T-cell (primary cell): ENCODE measurements at regions of chr7 and their contacts with region 1.

Region 1: DNA sequence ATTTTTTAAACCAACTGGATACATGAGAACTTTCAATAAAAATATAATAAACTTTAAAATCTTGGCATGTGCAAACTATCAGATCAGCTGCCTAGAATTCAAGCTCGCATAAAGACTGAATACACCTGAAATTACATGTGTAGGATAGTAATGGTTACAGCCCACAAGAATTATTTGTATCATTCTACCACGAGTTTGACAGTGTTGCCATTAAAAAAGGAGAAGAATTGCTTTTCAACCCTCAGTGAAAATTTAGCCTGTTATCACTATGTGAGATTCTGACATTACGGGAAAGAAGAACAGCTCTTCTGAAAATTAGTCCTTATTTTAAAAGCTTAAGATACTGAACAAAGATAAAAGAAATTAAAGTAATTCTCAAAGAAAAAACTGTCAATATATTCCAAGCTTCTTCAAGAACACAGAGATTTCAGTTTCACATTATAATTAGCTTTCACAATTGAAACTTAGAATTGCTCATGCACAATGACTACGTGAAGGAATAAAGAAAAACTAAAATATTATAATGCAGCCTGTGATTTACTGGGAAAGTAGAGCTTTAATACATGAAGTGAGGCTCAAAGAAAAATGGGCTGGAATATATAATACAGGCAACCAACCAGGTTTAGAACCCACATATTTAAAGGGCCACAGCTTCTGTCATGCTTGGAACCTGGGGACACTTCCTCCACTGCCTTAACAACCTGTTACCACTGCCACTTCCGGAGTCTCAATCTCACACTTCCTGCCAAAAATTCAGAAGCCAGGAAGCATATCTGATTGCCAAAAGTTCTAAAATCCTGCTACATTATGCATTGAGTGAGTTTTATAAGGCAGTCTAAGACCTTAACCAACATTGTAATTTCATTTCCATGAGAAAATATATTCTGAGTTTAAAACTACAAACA is 23.2 kb downstream of the TPK1 start:
- DNase-seq: peak in 33 of 35 experiments; percentile 9 to 76 (median 48)
- ATAC-seq: peak; percentile 94 to 99 (median 98)
- H3K4me3 ChIP-seq: no peak overlapping the region
- H3K4me3 Mint-ChIP-seq: peak overlapping the region; percentile 64 to 67 (median 67)
- H3K27ac ChIP-seq: peak overlapping the region; percentile 64
- H3K27ac Mint-ChIP-seq: peak overlapping the region; percentile 94 to 95
- H3K4me1 ChIP-seq: peaks cover 10 to 35% of the 10 kb centered on the region in 2 experiments
- H3K4me1 Mint-ChIP-seq: peaks cover 61 to 76% (median 71%) of the 10 kb centered on the region in 3 donors
- H3K27me3 ChIP-seq: no peaks in the 10 kb centered on the region
- H3K27me3 Mint-ChIP-seq: no peaks in the 10 kb centered on the region

Region 2: GRCh38 chr7:144629011-144629410 is 183.6 kb before region 1 on chr7:
- CTCF ChIA-PET with region 1: no interaction called
- POLR2A ChIA-PET with region 1: no interaction called
- DNase-seq: no peak
- ATAC-seq: no peak
- H3K4me3 ChIP-seq: no peak overlapping the region
- H3K4me3 Mint-ChIP-seq: no peak overlapping the region
- H3K27ac ChIP-seq: no peak overlapping the region
- H3K27ac Mint-ChIP-seq: no peak overlapping the region
- H3K4me1 ChIP-seq: no peaks in the 10 kb centered on the region
- H3K4me1 Mint-ChIP-seq: no peaks in the 10 kb centered on the region
- H3K27me3 ChIP-seq: no peaks in the 10 kb centered on the region
- H3K27me3 Mint-ChIP-seq: no peaks in the 10 kb centered on the region

Region 3: DNA sequence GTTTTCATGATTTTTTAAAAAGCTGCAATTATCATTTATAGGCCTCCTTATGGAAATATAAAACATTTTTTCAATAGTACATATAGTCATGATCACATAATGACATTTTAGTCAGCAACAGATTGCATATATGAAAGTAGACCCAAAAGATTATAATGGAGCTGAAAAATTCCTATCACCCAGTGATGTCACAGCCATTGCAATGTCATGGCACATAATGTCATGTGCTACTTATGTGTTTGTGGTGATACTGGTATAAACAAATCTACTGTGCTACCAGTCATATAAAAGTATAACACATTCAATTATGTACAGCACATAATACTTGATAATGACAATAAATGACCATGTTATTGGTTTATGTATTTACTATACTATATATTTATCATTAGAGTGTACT is 104.3 kb before region 1 on chr7:
- CTCF ChIA-PET with region 1: no interaction called
- POLR2A ChIA-PET with region 1: no interaction called
- DNase-seq: no peak
- ATAC-seq: no peak
- H3K4me3 ChIP-seq: no peak overlapping the region
- H3K4me3 Mint-ChIP-seq: no peak overlapping the region
- H3K27ac ChIP-seq: no peak overlapping the region
- H3K27ac Mint-ChIP-seq: no peak overlapping the region
- H3K4me1 ChIP-seq: no peaks in the 10 kb centered on the region
- H3K4me1 Mint-ChIP-seq: peaks cover 6 to 21% (median 7%) of the 10 kb centered on the region in 3 donors
- H3K27me3 ChIP-seq: no peaks in the 10 kb centered on the region
- H3K27me3 Mint-ChIP-seq: no peaks in the 10 kb centered on the region

Region 4: GRCh38 chr7:144761493-144761892 is 51.1 kb before region 1 on chr7:
- CTCF ChIA-PET with region 1: no interaction called
- POLR2A ChIA-PET with region 1: no interaction called
- DNase-seq: no peak
- ATAC-seq: no peak
- H3K4me3 ChIP-seq: no peak overlapping the region
- H3K4me3 Mint-ChIP-seq: no peak overlapping the region
- H3K27ac ChIP-seq: no peak overlapping the region
- H3K27ac Mint-ChIP-seq: no peak overlapping the region
- H3K4me1 ChIP-seq: no peaks in the 10 kb centered on the region
- H3K4me1 Mint-ChIP-seq: peaks cover 0 to 11% (median 0%) of the 10 kb centered on the region in 3 donors
- H3K27me3 ChIP-seq: no peaks in the 10 kb centered on the region
- H3K27me3 Mint-ChIP-seq: no peaks in the 10 kb centered on the region

Region 5: DNA sequence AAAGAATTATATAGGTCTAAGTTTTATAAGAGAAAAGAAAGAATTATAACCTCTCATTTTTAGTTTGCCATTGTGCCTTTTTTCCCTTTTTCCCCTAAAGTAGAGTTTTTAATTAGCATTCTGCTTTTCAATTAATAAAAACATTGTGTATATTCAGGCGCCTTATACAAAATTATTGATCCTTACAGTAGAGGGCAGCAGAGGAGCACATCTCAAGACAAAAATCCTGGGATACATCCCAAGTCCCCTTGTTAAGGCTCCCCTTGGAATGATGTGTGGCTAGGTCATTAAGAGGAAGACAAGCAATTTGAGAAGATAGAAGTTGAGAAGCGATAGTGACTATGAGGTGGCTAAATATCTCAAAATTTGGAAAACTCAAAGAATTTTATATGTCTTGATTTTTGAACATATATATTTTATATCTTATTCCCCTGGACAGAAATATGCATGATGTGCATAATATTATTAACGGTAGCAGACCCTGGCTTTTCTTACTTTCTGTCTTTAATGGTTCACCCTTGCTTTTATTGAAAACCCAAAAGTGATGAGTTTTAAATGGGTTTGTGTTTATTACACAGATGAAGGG is 42.3 kb after region 1 on chr7:
- CTCF ChIA-PET with region 1: interaction called in 1 of 2 experiments, 10 read pairs
- POLR2A ChIA-PET with region 1: no interaction called
- DNase-seq: peak in 1 of 35 experiments; percentile 32
- ATAC-seq: no peak
- H3K4me3 ChIP-seq: no peak overlapping the region
- H3K4me3 Mint-ChIP-seq: no peak overlapping the region
- H3K27ac ChIP-seq: no peak overlapping the region
- H3K27ac Mint-ChIP-seq: no peak overlapping the region
- H3K4me1 ChIP-seq: no peaks in the 10 kb centered on the region
- H3K4me1 Mint-ChIP-seq: no peaks in the 10 kb centered on the region
- H3K27me3 ChIP-seq: no peaks in the 10 kb centered on the region
- H3K27me3 Mint-ChIP-seq: peaks cover 2 to 7% of the 10 kb centered on the region in 2 donors